ENCODE measurements at regions of chr6 and their contacts with region 1.

Region 1: DNA sequence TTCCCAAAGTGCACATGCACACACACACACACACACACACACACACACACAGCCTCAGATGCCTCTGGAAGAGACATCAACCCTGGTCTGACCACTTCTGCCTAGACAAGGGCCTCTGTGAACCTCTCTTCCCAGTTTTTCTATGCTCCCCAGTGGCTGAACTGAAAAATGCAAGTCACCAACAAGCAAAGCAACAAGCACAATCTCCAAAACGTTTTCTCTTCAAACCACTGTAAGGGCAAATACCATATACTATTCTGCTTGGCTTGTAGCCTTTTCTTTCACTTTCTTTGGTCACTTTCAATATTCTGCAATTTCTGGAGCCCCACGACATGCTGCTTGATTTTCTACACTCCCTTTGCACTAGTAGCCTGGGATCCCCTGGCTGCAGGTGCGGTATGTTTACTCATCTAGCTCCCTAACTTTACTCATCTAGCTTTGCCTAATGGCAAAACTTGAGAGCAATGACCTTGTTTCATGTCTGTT is 121.4 kb upstream of the DST start:
- DNase-seq: peak; percentile 84
- ATAC-seq: peak; percentile 51
- H3K4me3 ChIP-seq: peak overlapping the region; percentile 22; the same call in 1 of the 2 replicates
- H3K27ac ChIP-seq: peak overlapping the region; percentile 65
- H3K4me1 ChIP-seq: peaks cover 86% of the 10 kb centered on the region
- H3K27me3 ChIP-seq: no peaks in the 10 kb centered on the region
- CTCF ChIP-seq: peak; percentile 44 to 57 (median 57); a peak in 4 of 6 replicates
- EP300 ChIP-seq: peak in 1 of 2 experiments; percentile 30; a peak in 2 of 4 replicates
- POLR2A ChIP-seq: no peak
- RAD21 ChIP-seq: peak; percentile 60

Region 2: DNA sequence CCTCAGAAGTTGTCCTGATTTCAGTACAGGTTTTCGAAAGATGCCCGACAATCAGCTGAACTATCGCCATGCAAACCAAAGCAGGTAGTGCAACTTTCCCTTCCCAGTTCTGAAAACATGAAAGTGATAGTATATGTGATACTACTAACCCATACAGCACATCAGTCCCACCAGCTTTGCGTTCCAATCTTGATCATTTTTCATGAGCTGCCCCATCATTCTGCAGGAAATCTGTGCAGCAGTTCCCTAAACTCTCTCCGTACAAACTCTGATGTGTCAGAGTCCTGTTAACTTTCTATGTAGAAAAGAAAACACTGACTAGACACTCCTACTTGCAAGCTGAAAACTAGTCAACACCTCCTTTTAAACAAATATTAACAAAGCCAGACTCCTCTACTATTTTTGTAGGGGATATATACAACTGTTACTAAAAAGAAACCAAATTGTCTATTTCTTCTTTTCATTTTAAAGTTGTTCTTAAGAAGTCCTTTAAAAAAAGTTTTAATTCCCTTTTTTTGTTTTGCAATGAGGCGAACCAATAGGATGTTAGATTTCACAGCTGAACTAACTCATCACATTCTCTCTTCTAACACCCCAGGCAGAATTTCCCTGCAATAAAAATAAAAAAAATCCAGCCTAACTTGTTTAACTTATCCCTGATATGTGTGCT is 21.9 kb before region 1 on chr6:
- CTCF ChIA-PET with region 1: interaction called, 14 read pairs
- POLR2A ChIA-PET with region 1: interaction called, 10 read pairs
- RAD21 ChIA-PET with region 1: interaction called, 48 read pairs
- SMC1A ChIA-PET with region 1: interaction called, 67 read pairs
- in situ Hi-C with region 1: no loop called
- intact Hi-C with region 1: no loop called
- DNase-seq: no peak
- ATAC-seq: peak; percentile 83
- H3K4me3 ChIP-seq: peak overlapping the region; percentile 17; the same call in 1 of the 2 replicates
- H3K27ac ChIP-seq: peak overlapping the region; percentile 50
- H3K4me1 ChIP-seq: peaks cover 20% of the 10 kb centered on the region
- H3K27me3 ChIP-seq: no peaks in the 10 kb centered on the region
- CTCF ChIP-seq: no peak
- EP300 ChIP-seq: no peak
- POLR2A ChIP-seq: no peak
- RAD21 ChIP-seq: no peak

Region 3: GRCh38 chr6:56790414-56790813 is 26.3 kb after region 1 on chr6:
- CTCF ChIA-PET with region 1: interaction called, 14 read pairs
- POLR2A ChIA-PET with region 1: interaction called, 3 read pairs
- RAD21 ChIA-PET with region 1: interaction called, 15 read pairs
- SMC1A ChIA-PET with region 1: interaction called, 26 read pairs
- in situ Hi-C with region 1: no loop called
- intact Hi-C with region 1: loop called (anchors 2 kb)
- DNase-seq: no peak
- ATAC-seq: peak; percentile 72
- H3K4me3 ChIP-seq: no peak overlapping the region
- H3K27ac ChIP-seq: peak overlapping the region; percentile 82
- H3K4me1 ChIP-seq: peaks cover 41% of the 10 kb centered on the region
- H3K27me3 ChIP-seq: no peaks in the 10 kb centered on the region
- CTCF ChIP-seq: no peak
- EP300 ChIP-seq: peak in 1 of 2 experiments; percentile 65; a peak in 1 of 4 replicates
- POLR2A ChIP-seq: no peak
- RAD21 ChIP-seq: no peak

Region 4: DNA sequence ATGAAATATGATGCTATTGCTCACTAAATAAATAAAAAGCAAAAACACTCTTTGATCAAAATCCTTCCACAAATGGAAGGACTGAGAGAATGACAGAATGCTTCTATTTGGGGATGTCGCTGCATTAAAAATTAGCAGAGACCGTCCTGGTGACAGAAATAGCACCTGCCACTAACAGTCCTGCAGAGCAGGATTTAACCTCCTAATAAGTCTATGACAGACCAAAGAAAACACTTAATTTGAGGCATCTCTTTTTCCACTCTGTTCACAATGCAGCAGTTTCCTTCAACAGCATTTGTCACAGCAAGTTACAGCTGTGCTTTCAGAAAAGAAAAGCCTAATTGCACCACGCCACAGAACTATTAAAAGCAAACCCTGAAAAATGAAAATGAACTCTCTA is 50.2 kb after region 1 on chr6:
- CTCF ChIA-PET with region 1: interaction called, 3 read pairs
- POLR2A ChIA-PET with region 1: interaction called, 3 read pairs
- RAD21 ChIA-PET with region 1: interaction called, 13 read pairs
- SMC1A ChIA-PET with region 1: interaction called, 11 read pairs
- in situ Hi-C with region 1: no loop called
- intact Hi-C with region 1: no loop called
- DNase-seq: peak; percentile 47
- ATAC-seq: peak; percentile 79
- H3K4me3 ChIP-seq: peak overlapping the region; percentile 18; the same call in 1 of the 2 replicates
- H3K27ac ChIP-seq: peak overlapping the region; percentile 22; the same call in 1 of the 2 replicates
- H3K4me1 ChIP-seq: peaks cover 33% of the 10 kb centered on the region
- H3K27me3 ChIP-seq: no peaks in the 10 kb centered on the region
- CTCF ChIP-seq: no peak
- EP300 ChIP-seq: 0 out of 4 replicates have a peak, but pooled peaks of 1 of the 2 experiments have one; percentile 11
- POLR2A ChIP-seq: no peak
- RAD21 ChIP-seq: no peak

Region 5: GRCh38 chr6:56833127-56833791 is 69.1 kb after region 1 on chr6:
- CTCF ChIA-PET with region 1: interaction called, 494 read pairs
- POLR2A ChIA-PET with region 1: no interaction called
- RAD21 ChIA-PET with region 1: interaction called, 17 read pairs
- SMC1A ChIA-PET with region 1: interaction called, 10 read pairs
- in situ Hi-C with region 1: no loop called
- intact Hi-C with region 1: no loop called
- DNase-seq: no peak
- ATAC-seq: peak; percentile 75
- H3K4me3 ChIP-seq: no peak overlapping the region
- H3K27ac ChIP-seq: no peak overlapping the region
- H3K4me1 ChIP-seq: peaks cover 21% of the 10 kb centered on the region; the same call in 1 of the 2 replicates
- H3K27me3 ChIP-seq: no peaks in the 10 kb centered on the region
- CTCF ChIP-seq: no peak
- EP300 ChIP-seq: no peak
- POLR2A ChIP-seq: no peak
- RAD21 ChIP-seq: no peak

Region 6: GRCh38 chr6:56955171-56956045 is 191.3 kb after region 1 on chr6:
- CTCF ChIA-PET with region 1: no interaction called
- POLR2A ChIA-PET with region 1: no interaction called
- RAD21 ChIA-PET with region 1: no interaction called
- SMC1A ChIA-PET with region 1: no interaction called
- in situ Hi-C with region 1: no loop called
- intact Hi-C with region 1: loop called (anchors 10 kb)
- DNase-seq: peak; percentile 62
- ATAC-seq: peak; percentile 79
- H3K4me3 ChIP-seq: peak overlapping the region; percentile 79
- H3K27ac ChIP-seq: peak overlapping the region; percentile 91
- H3K4me1 ChIP-seq: peaks cover 17% of the 10 kb centered on the region
- H3K27me3 ChIP-seq: no peaks in the 10 kb centered on the region
- CTCF ChIP-seq: peak; percentile 75 to 90 (median 80)
- EP300 ChIP-seq: no peak
- POLR2A ChIP-seq: peak; percentile 60
- RAD21 ChIP-seq: peak; percentile 62